Left ventricle myocardium superior (tissue), 1 donor: ENCODE measurements at regions of chr6 and their contacts with region 1.

Region 1: DNA sequence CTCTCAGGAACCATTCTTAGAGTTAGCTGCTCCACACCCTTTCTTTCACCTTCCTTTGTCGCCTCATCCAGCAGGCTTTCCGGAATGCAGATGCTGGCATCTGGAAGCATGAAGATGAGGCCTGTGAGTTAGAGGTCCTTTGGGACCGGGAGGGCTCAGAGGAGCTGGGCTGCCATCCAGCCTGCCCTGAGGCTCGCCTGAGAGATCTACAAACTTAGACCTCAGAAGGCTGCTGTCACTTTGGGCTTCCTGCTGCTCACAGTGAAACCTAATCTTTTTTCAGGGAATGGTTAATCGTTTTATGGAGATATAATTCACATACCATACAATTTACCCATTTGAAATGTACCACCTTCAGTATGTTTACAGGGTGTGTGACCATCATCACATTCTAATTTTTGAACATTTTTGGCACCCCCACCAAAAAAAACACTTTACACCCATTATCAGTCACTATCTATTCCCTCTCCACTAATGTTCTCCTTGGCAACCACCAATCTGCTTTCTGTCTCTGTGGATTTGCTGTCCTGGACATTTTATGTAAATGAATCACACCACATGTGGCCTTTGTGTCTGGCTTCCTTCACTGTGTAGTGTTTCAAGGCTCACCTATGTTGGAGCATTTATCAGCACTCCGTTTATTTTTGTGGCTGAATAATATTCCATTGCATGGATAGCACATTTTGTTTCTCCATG is 20.0 kb upstream of the MPC1 start:
- DNase-seq: no peak
- ATAC-seq: no peak

Region 2: DNA sequence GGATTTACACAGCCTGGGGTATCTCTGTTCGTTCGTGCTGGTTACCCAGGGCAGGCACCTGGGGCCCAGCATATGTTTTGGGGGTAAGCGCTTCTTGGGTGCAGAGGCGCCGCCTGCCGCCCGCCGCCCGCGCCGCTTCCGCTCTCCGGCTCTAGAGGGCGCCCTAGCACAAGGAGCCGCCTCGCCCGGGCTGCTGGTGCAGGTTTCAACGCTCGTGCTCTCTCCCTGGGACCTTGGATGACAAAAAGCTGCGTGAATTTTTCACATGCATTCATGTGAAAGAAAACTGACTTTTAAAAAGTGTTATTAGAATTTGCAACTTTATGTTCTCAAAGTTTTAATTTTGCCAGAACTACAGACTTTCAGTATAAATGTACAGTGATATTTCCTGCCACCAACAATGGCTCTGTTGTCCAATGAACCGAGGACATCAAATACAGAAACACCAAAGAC is 127.0 kb before region 1 on chr6:
- intact Hi-C with region 1: loop called (anchors 5 kb)
- DNase-seq: peak; percentile 85
- ATAC-seq: peak; percentile 88

Region 3: GRCh38 chr6:166313255-166314070 is 89.3 kb before region 1 on chr6:
- intact Hi-C with region 1: loop called (anchors 2 kb)
- DNase-seq: peak; percentile 62
- ATAC-seq: peak; percentile 80